AG04450 (cell line): ENCODE measurements at regions of chr17 and their contacts with region 1.

Region 1: DNA sequence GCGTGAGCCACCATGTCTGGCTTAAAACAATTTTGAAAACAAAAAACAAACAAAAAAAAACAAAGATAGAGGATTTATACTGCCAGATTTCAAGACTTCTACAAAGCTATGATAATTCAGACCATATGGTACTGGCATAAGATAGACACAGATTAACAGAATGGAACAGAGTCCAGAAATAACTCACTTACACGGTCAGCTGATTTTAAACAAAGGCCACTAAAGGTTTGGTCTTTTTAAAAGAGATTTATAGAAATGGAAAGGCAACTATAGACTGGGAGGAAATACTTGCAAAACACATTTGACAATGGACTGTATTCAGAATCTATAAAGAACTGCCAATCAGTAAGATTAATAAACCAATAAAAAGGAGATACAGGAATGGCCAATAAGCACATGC is 48.6 kb upstream of the MNT start:
- DNase-seq: no peak
- H3K4me3 ChIP-seq: no peak overlapping the region
- H3K27ac ChIP-seq: no peak overlapping the region
- H3K27me3 ChIP-seq: no peaks in the 10 kb centered on the region
- CTCF ChIP-seq: no peak

Region 2: DNA sequence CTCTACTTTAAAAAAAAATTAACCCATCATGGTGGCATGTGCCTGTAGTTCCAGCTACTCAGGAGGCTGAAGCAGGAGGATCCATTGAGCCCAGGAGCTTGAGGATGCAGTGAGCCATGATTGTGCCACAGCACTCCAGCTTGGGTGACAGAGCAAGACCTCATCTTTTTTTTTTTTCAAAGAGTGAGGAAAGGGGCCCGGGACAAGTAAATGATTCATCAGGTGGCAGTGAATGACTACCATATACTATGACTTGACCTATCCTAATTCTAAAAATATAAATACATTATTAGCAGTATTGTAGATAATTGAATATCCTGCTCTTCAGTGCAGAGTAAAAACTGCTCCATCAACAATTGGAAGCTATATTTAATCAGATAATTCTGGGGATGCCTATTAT is 206.8 kb after region 1 on chr17:
- CTCF ChIA-PET with region 1: no interaction called
- POLR2A ChIA-PET with region 1: interaction called, 11 read pairs
- DNase-seq: no peak
- H3K4me3 ChIP-seq: no peak overlapping the region
- H3K27ac ChIP-seq: no peak overlapping the region
- H3K27me3 ChIP-seq: no peaks in the 10 kb centered on the region
- CTCF ChIP-seq: no peak